ENCODE measurements at regions of chr1 and their contacts with region 1.

Region 1: DNA sequence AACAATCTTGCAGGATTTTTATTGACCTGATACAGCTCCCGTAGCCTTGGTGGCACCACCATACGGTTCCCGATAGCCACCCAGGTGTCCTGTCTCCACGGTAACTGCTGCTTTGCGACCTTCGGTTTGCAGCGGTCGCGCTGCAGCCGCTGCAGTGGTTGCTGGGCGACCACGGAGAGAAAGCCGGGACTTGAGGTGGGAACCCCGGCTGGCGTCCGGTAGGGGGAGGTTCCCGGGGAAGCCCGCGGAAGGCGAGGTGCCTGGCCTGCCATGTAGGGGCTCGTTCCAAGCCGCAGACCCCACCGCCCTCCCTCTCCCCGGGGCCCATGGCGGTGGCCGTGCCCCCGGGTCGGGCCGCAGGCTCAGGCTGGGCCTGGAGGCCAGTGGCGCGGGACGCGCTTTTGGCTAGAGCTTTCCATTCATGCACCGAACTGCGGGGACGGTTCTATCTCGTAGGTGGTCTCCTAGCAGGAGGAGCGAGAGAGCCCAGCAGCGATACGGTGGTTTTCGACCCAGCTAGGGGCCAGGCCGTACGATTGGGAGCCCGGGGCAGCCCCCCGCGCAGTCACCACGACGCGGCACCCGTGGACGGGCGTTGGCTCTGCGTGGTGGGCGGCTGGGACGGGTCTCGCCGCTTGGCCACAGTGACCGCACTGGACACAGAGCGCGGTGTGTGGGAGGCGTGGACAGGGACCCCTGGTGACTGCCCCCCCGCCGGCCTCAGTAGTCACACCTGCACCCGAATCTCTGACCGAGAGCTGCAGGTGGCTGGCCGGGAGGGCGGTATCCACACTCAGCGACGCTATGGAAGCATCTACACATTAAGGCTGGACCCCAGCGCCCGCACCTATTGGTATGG is at the start of gene KLHDC9:
- DNase-seq: peak; percentile 79
- H3K4me3 ChIP-seq: peak within 1 kb of the TSS; percentile 12 to 65 (median 45)
- H3K27ac ChIP-seq: no peak within 1 kb of the TSS
- H3K4me1 ChIP-seq: peaks cover 8% of the 10 kb centered on the region
- H3K27me3 ChIP-seq: no peaks in the 10 kb centered on the region
- CTCF ChIP-seq: peak in 1 of 2 donors; percentile 33
- POLR2A ChIP-seq: no peak
- total RNA-seq, gene KLHDC9: 1.1 and 1.4 TPM in 2 replicates

Region 2: DNA sequence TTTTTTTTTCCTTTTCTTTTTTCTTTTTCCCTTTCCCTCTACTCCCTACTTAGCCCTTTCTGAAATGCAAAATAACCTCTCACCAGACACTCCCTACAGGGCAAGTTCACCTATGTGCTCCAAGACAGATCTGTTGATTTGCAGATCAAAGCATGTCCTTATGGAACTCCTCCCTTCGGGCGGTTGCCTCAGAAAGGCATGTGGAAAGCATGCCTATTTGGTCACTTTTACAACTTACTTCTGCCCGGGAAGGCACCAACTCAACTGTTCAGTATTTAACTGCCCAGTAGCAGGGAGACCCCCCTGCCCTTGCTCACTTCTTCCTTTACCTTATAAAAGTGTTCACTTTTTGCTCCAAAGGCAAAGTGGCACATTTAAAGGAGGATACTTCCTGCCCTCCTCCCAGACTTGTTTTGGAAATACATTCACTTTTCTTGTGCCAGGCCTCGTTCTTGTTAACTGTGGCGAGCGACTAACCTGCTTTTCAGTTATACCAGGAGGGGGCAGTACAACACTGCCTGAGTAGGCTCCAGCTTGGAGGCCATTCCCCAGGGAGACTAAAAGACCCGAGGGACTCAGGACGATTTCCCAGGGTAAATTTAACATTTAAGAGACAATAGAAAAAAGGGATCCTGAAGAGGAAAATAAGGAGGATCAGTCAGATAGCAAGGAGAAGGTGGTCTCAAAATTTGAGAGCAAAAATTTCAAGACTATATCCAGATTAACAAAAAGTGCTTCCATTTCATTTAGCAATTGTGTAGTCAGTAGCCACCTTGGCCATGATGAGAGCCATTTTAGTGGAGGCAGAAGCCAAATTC is 371.7 kb before region 1 on chr1:
- CTCF ChIA-PET with region 1: interaction called, 3 read pairs
- POLR2A ChIA-PET with region 1: no interaction called
- dilution Hi-C with region 1: no loop called
- intact Hi-C with region 1: loop called (anchors 5 kb)
- DNase-seq: peak; percentile 68
- H3K4me3 ChIP-seq: no peak overlapping the region
- H3K27ac ChIP-seq: no peak overlapping the region
- H3K4me1 ChIP-seq: no peaks in the 10 kb centered on the region
- H3K27me3 ChIP-seq: no peaks in the 10 kb centered on the region
- CTCF ChIP-seq: peak; percentile 76 to 77
- POLR2A ChIP-seq: no peak

Region 3: GRCh38 chr1:160997323-160998038 is 101.0 kb before region 1 on chr1:
- CTCF ChIA-PET with region 1: interaction called, 197 read pairs
- POLR2A ChIA-PET with region 1: no interaction called
- dilution Hi-C with region 1: no loop called
- intact Hi-C with region 1: loop called (anchors 1 kb)
- DNase-seq: peak; percentile 90
- H3K4me3 ChIP-seq: no peak overlapping the region
- H3K27ac ChIP-seq: peak overlapping the region; percentile 62
- H3K4me1 ChIP-seq: peaks cover 24% of the 10 kb centered on the region
- H3K27me3 ChIP-seq: no peaks in the 10 kb centered on the region
- CTCF ChIP-seq: peak; percentile 77 to 86
- POLR2A ChIP-seq: no peak

Region 4: GRCh38 chr1:161045750-161046571 is 52.5 kb before region 1 on chr1 and contains the start of gene USF1:
- CTCF ChIA-PET with region 1: interaction called, 23 read pairs
- POLR2A ChIA-PET with region 1: no interaction called
- dilution Hi-C with region 1: no loop called
- intact Hi-C with region 1: loop called (anchors 1 kb)
- DNase-seq: peak; percentile 98
- H3K4me3 ChIP-seq: peak within 1 kb of the TSS; percentile 66 to 82 (median 66)
- H3K27ac ChIP-seq: peak within 1 kb of the TSS; percentile 94
- H3K4me1 ChIP-seq: peaks cover 10% of the 10 kb centered on the region
- H3K27me3 ChIP-seq: no peaks in the 10 kb centered on the region
- CTCF ChIP-seq: no peak
- POLR2A ChIP-seq: peak; percentile 76
- total RNA-seq, gene USF1: 56.7 and 57.9 TPM in 2 replicates

Region 5: DNA sequence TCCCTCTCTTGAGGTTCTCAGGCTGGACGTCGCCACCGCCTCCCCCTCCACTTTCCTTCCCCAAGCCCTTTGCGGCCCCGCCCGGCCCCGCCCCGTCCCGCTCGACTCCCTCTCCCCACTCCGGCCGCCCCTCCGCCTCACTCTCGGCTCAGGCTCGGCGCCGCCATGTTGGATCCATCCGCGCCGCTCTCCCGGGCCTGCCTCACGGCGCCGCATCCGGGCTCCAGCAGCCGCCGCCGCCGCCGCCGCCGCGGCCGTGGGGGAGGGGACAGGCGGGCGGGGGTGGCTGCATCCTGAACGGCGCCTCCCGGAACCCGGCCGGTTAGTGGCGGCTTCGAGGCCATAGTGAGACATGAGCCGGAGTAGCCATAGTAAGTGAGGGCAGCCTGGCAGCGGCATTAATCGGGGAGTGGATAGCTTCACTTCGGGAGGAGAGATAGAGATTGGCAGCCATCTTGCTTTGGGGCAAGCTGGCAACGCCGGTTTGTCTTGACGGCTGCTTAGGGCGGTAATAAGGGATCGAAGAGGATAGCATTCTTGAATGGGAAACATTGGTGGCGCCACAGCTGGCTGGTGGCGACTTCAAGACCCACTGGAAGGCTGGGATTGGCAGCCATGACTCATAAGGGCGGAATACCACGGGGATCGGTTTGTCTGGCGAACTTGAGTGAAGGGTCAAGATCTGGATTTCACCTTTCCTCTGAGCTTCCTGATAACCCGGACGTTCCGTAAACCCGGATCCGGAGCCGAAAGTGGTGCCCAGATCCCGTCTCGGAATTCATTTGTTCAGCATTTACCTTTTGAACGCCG is 34.2 kb after region 1 on chr1 and contains the start of gene DEDD:
- CTCF ChIA-PET with region 1: interaction called, 34 read pairs
- POLR2A ChIA-PET with region 1: no interaction called
- dilution Hi-C with region 1: no loop called
- intact Hi-C with region 1: no loop called
- DNase-seq: peak; percentile 97
- H3K4me3 ChIP-seq: peak within 1 kb of the TSS; percentile 90 to 100 (median 94)
- H3K27ac ChIP-seq: peak within 1 kb of the TSS; percentile 85
- H3K4me1 ChIP-seq: peaks cover 26% of the 10 kb centered on the region
- H3K27me3 ChIP-seq: no peaks in the 10 kb centered on the region
- CTCF ChIP-seq: peak; percentile 1 to 4
- POLR2A ChIP-seq: no peak
- total RNA-seq, gene DEDD: 50.2 and 54.9 TPM in 2 replicates

Region 6: DNA sequence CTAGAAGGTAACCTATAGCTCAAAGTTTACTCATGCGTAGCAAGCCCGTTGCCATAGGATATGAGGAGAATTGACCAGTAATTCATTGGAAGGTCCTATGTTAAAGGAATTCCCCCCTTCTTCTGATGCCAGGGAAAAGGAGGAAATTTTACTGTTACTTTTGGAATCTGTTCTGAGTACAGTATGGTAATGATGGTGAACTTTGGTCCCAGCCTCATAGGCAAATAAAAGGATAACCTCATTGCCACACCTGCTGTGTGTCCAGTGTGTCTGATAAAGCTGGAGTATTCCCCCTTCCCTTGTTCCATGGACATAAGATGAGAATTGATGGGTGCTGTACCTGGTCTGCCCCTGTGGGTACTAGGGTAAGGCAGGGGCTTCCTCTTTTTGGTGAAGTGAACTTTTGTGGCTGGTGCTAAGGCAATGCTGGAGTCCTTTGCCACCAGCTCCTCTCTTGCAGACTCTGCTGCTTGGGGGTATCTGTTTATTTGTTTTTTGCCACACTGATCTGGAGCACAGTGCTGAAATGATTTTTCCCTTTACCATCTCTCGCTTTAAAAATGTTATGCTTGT is 189.1 kb after region 1 on chr1:
- CTCF ChIA-PET with region 1: no interaction called
- POLR2A ChIA-PET with region 1: no interaction called
- dilution Hi-C with region 1: no loop called
- intact Hi-C with region 1: no loop called
- DNase-seq: no peak
- H3K4me3 ChIP-seq: no peak overlapping the region
- H3K27ac ChIP-seq: no peak overlapping the region
- H3K4me1 ChIP-seq: no peaks in the 10 kb centered on the region
- H3K27me3 ChIP-seq: peaks cover 26 to 35% of the 10 kb centered on the region in 2 experiments
- CTCF ChIP-seq: no peak
- POLR2A ChIP-seq: no peak

Measured in endothelial cell of umbilical vein (primary cell).